ENCODE measurements at regions of chr3 and their contacts with region 1.

Region 1: GRCh38 chr3:156044634-156044975 is 75.8 kb upstream of the KCNAB1 start:
- DNase-seq: no peak
- ATAC-seq: no peak
- H3K4me3 Mint-ChIP-seq: no peak overlapping the region
- H3K27ac Mint-ChIP-seq: no peak overlapping the region
- H3K4me1 Mint-ChIP-seq: no peaks in the 10 kb centered on the region
- H3K27me3 Mint-ChIP-seq: peaks cover 15% of the 10 kb centered on the region
- CTCF ChIP-seq: no peak

Region 2: GRCh38 chr3:156033428-156033827 is 11.2 kb before region 1 on chr3:
- CTCF ChIA-PET with region 1: interaction called, 15 read pairs
- POLR2A ChIA-PET with region 1: no interaction called
- intact Hi-C with region 1: no loop called
- DNase-seq: no peak
- ATAC-seq: no peak
- H3K4me3 Mint-ChIP-seq: no peak overlapping the region
- H3K27ac Mint-ChIP-seq: no peak overlapping the region
- H3K4me1 Mint-ChIP-seq: no peaks in the 10 kb centered on the region
- H3K27me3 Mint-ChIP-seq: no peaks in the 10 kb centered on the region
- CTCF ChIP-seq: no peak

Region 3: DNA sequence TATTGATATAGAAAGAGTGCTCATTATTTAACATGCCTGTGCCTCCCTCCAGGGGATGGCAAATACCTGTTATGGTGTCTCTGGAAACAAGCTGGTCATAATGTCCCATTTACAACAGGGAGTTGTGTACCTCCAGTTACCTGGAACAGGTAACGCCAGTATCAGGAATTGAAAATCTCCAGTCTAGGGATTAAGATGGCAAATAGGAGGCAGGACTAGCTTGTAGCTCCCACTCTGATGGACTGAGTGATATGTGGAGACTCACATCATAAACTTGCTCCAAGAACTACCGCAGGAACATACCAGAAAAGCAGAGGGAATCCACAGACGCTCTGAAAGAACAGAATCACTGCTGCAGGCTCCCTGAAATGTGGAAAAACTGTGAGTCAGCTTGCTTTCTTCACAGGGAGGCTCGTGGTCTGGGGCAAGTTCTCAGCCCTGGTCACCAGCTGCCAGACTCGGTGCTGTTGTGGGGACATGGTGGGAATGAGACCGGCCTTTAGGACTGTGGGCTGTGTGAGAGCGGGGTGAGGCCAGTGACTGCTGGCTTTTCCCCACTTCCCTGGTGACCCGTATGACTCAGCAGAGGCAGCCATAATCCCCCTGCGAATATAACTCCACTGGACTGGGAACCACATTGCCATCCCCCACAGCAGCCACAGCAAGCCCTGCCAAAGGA is 173.2 kb after region 1 on chr3:
- CTCF ChIA-PET with region 1: no interaction called
- POLR2A ChIA-PET with region 1: no interaction called
- intact Hi-C with region 1: no loop called
- DNase-seq: no peak
- ATAC-seq: no peak
- H3K4me3 Mint-ChIP-seq: no peak overlapping the region
- H3K27ac Mint-ChIP-seq: no peak overlapping the region
- H3K4me1 Mint-ChIP-seq: no peaks in the 10 kb centered on the region
- H3K27me3 Mint-ChIP-seq: peaks cover 19% of the 10 kb centered on the region
- CTCF ChIP-seq: no peak

Measured in activated CD8-positive, alpha-beta T cell treated with anti-CD3 and anti-CD28 coated beads for 36 hours (primary cell).